AG04450 (cell line): ENCODE measurements at regions of chr18 and their contacts with region 1.

Region 1: DNA sequence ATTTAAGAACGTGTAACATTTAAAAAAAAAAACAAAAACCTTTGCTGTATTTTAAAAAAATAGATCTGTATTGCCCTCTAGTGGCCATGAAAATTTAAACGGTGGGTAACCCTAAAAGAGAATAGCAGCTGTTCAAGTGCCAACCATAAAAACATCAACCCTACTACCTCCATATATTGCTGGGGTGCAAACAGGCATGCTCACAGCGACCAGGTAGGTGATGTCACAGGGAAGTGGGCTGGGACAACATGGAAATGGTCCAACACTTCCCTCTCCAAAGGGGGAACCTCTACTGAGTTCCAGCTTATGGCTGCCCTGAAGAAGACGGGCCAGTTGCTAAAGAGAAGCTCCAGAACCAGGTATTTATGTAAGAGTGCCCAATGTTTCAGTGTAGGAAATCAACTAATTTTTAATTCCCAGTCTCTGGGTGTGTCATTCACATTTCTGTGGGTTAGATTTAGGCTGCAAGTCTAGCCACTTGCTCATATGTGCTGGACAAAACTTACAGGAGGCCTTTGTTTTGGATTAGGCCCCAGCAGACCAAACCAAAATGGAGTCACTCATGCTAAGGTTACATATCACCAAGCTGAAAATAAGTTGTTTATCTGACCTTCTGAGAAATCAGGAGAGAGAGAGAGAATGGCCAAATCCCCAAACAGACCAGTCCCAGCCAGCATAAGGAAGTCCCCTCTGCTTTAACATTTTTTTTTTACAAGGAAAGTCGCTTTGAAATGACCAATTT is 54.5 kb downstream of the SKA1 start:
- DNase-seq: no peak
- H3K4me3 ChIP-seq: no peak overlapping the region
- H3K27ac ChIP-seq: no peak overlapping the region
- H3K27me3 ChIP-seq: no peaks in the 10 kb centered on the region
- CTCF ChIP-seq: peak; percentile 58

Region 2: DNA sequence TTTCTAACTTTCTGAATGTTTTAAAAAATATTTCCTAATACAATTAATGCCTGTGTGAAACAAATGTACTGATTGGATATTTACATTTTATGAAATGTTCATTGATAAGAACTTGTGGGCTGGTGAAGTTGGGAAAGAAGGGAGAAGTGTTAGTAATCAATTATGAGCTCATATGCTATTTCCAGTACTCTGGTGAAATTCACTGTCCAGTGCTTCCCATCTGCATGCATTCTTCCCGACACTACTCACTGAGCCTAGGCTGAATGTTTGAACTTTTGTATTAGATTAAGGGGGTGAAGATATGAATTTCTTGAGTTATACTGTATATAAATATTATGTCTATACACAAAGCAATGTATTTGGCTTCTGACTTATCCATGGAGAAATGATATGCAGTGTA is 18.5 kb before region 1 on chr18:
- CTCF ChIA-PET with region 1: interaction called, 15 read pairs
- POLR2A ChIA-PET with region 1: no interaction called
- DNase-seq: no peak
- H3K4me3 ChIP-seq: no peak overlapping the region
- H3K27ac ChIP-seq: no peak overlapping the region
- H3K27me3 ChIP-seq: peaks cover 6% of the 10 kb centered on the region
- CTCF ChIP-seq: no peak